PC-9 (cell line): ENCODE measurements at regions of chr14 and their contacts with region 1.

Region 1: GRCh38 chr14:103401223-103402214 is 16.3 kb downstream of the MARK3 start:
- DNase-seq: peak in 1 of 2 experiments; percentile 22
- H3K4me3 ChIP-seq: no peak overlapping the region
- H3K27ac ChIP-seq: peak overlapping the region; percentile 63
- H3K4me1 ChIP-seq: peaks cover 59% of the 10 kb centered on the region
- H3K27me3 ChIP-seq: no peaks in the 10 kb centered on the region
- CTCF ChIP-seq: no peak

Region 2: GRCh38 chr14:103141119-103141796 is 260.3 kb before region 1 on chr14:
- CTCF ChIA-PET with region 1: no interaction called
- POLR2A ChIA-PET with region 1: no interaction called
- intact Hi-C with region 1: no loop called
- DNase-seq: peak; percentile 78 to 84
- H3K4me3 ChIP-seq: no peak overlapping the region
- H3K27ac ChIP-seq: 0 out of 2 replicates have a peak overlapping the region, but pooled peaks have one; percentile 30
- H3K4me1 ChIP-seq: peaks cover 59% of the 10 kb centered on the region
- H3K27me3 ChIP-seq: no peaks in the 10 kb centered on the region
- CTCF ChIP-seq: peak; percentile 99

Region 3: DNA sequence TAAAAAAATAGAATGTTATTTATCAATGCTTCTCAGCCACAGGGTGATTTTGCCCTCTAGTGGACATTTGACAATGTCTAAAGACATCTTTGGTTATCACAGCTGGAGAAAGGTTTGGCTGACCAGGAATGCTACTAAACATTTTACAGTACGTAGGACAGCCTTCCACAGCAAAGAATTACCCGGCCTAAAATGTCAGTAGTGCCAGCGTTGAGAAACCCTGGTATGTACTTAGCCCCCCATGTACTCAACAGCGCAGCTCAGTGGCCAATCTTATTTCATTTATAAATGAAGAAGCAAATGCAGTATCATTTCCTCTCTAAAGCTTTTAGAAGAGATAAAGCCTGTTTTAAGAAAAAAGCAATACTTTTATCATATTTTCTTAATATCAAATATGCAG is 10.5 kb before region 1 on chr14:
- CTCF ChIA-PET with region 1: interaction called, 5 read pairs
- POLR2A ChIA-PET with region 1: interaction called, 3 read pairs
- intact Hi-C with region 1: loop called (anchors 1 kb)
- DNase-seq: peak; percentile 45 to 72
- H3K4me3 ChIP-seq: no peak overlapping the region
- H3K27ac ChIP-seq: no peak overlapping the region
- H3K4me1 ChIP-seq: peaks cover 57% of the 10 kb centered on the region
- H3K27me3 ChIP-seq: no peaks in the 10 kb centered on the region
- CTCF ChIP-seq: peak; percentile 97

Region 4: GRCh38 chr14:103427485-103428443 is 26.2 kb after region 1 on chr14:
- CTCF ChIA-PET with region 1: no interaction called
- POLR2A ChIA-PET with region 1: interaction called, 14 read pairs
- intact Hi-C with region 1: no loop called
- DNase-seq: peak in 1 of 2 experiments; percentile 35
- H3K4me3 ChIP-seq: no peak overlapping the region
- H3K27ac ChIP-seq: 0 out of 2 replicates have a peak overlapping the region, but pooled peaks have one; percentile 4
- H3K4me1 ChIP-seq: peaks cover 8% of the 10 kb centered on the region
- H3K27me3 ChIP-seq: no peaks in the 10 kb centered on the region
- CTCF ChIP-seq: no peak

Region 5: DNA sequence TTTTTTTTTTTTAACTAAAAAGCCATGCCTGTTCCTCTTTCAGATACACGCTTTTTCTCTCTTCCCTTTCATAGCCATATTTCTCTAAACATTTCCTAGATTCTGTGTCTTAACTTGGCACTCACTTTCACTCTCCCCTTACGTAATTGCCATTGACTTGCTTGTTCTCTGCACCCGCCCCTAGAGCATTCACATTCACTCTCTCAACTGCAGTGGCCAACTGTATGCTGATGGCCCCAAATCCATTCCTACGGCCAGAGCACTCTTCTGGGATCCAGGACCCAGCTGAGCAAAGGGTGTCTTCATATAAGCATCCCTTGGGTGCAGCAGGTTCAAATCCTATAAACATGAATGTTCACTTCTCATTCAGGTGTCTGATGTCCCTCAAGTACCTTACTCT is 61.6 kb after region 1 on chr14:
- CTCF ChIA-PET with region 1: interaction called, 11 read pairs
- POLR2A ChIA-PET with region 1: no interaction called
- intact Hi-C with region 1: no loop called
- DNase-seq: no peak
- H3K4me3 ChIP-seq: no peak overlapping the region
- H3K27ac ChIP-seq: no peak overlapping the region
- H3K4me1 ChIP-seq: no peaks in the 10 kb centered on the region
- H3K27me3 ChIP-seq: no peaks in the 10 kb centered on the region
- CTCF ChIP-seq: no peak